Activated CD4-positive, alpha-beta T cell treated with anti-CD3 and anti-CD28 coated beads for 36 hours (primary cell): ENCODE measurements at regions of chr1 and their contacts with region 1.

Region 1: DNA sequence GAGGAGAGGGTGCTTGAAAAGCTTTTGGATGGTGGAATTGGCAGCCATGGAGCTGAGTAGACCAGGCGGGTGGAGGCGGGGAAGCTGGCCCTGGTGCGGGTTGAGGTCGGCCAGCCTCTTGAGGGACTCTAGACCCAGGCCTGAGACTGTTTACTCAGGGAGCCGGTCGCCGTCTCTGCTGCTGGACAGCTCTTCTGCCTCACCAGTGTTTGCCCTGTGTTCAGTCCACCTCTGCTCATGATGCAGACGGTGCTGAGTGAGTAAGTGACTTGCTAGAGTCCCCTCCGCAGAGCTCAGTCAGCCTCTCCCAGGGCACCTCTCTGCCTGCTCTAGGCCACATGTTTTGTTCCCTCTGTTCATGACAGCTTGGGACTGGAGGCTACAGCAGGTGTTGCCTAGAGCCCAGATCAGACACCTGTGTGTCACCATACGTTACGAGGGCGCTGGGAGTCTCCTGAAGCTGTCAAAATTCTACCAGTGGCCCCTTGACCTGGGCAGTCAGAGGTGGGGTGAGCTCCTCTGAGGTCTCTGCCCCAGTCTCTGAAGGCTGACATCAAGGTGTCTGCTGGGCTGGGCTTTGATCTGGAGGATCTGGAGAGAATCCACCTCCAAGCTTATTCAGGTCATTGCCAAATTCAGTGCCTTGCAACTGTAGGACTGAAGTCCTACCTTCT is 73.5 kb upstream of the WNT4 start:
- DNase-seq: no peak
- ATAC-seq: no peak
- H3K4me3 Mint-ChIP-seq: no peak overlapping the region
- H3K27ac Mint-ChIP-seq: no peak overlapping the region
- H3K4me1 Mint-ChIP-seq: no peaks in the 10 kb centered on the region
- H3K27me3 Mint-ChIP-seq: peaks cover 17% of the 10 kb centered on the region

Region 2: GRCh38 chr1:22137004-22137720 is 79.2 kb before region 1 on chr1:
- CTCF ChIA-PET with region 1: no interaction called
- POLR2A ChIA-PET with region 1: no interaction called
- intact Hi-C with region 1: loop called in 1 of 2 experiments (anchors 2 kb)
- DNase-seq: no peak
- ATAC-seq: no peak
- H3K4me3 Mint-ChIP-seq: no peak overlapping the region
- H3K27ac Mint-ChIP-seq: no peak overlapping the region
- H3K4me1 Mint-ChIP-seq: no peaks in the 10 kb centered on the region
- H3K27me3 Mint-ChIP-seq: peaks cover 18% of the 10 kb centered on the region

Region 3: DNA sequence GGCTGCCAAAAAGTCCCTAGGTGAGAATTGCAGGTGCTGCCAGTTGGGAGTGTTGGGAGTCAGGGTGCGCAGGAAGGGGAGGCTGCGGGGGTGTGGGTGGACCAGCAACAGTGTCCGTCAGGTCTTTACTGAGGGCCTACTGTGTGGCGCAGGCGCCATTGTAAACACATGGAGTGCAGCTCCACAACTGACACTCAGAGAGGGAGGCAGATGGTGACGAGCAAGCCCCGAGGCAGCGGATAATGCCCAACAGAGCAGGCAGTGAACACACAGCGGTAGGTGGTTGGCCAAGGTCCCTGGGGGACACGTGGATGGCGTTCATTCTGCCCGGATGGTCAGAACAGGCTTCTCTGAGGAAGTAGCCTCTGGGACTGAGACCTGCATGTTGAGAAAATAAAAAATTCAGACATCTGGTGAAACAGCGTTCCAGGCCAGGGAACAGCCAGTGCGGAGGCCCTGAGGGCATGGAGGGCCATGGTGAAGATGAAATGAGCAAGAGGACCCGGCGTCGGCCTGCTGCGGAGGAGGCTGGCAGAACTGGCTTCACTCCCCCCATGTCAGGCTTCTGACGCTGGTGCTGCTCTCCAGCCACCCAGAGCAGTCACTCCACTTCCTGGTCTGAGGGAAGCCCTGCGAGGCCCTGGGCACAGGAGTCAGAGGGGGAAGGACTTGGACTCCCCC is 99.2 kb after region 1 on chr1:
- CTCF ChIA-PET with region 1: no interaction called
- POLR2A ChIA-PET with region 1: no interaction called
- intact Hi-C with region 1: no loop called
- DNase-seq: no peak
- ATAC-seq: no peak
- H3K4me3 Mint-ChIP-seq: no peak overlapping the region
- H3K27ac Mint-ChIP-seq: no peak overlapping the region
- H3K4me1 Mint-ChIP-seq: no peaks in the 10 kb centered on the region
- H3K27me3 Mint-ChIP-seq: peaks cover 17% of the 10 kb centered on the region